ENCODE measurements at regions of chr1 and their contacts with region 1.

Region 1: GRCh38 chr1:163761898-163762297 is 440.1 kb downstream of the NUF2 start:
- DNase-seq: no peak
- ATAC-seq: no peak

Region 2: DNA sequence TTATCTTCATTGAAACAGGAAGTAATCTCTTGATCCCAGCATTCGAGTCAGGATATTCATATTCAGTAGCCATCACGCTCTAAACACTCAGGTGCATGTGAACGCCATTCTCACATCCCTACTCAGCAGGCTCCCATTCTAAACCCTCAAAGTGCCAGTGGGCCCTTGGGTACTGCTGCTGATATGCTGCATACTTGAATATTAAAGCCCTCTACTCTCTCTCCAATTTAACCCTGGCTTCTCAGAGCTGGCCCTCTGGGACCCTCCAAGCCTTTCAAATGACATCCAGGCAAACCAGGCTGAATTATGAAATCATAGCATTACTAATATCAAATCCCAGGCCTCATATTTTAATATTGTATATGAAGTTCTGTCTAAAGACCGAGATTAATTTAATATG is 28.0 kb after region 1 on chr1:
- intact Hi-C with region 1: loop called (anchors 2 kb)
- DNase-seq: no peak
- ATAC-seq: no peak

Region 3: DNA sequence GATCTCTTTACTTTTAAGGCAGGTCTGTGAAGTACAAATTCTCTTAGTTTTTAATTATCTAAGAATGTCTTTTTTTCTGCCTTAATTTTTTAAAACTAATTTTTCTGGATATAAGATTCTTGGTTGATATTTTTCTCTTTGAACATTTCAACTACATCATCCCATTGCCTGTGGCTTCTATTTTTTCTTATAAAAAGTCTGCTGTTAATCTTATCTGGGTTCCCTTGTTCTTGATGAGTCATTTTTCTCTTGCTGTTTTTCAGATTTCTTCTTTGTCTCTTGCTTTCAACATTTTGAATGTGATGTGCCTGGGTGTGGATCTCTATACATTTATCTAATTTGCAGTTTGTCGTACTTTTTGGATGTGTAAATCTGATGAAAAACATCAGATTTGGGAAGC is 271.9 kb after region 1 on chr1:
- intact Hi-C with region 1: no loop called
- DNase-seq: no peak
- ATAC-seq: no peak

Measured in left ventricle myocardium superior (tissue), 1 donor.